ENCODE measurements at regions of chr6 and their contacts with region 1.

Region 1: GRCh38 chr6:33761922-33762629 is 15.4 kb upstream of the IP6K3 start:
- DNase-seq: peak; percentile 66
- ATAC-seq: peak; percentile 77
- H3K4me3 Mint-ChIP-seq: no peak overlapping the region
- H3K27ac Mint-ChIP-seq: no peak overlapping the region
- H3K4me1 Mint-ChIP-seq: peaks cover 7% of the 10 kb centered on the region; the same call in 1 of the 2 replicates
- H3K27me3 Mint-ChIP-seq: no peaks in the 10 kb centered on the region; the same call in 1 of the 2 replicates
- CTCF ChIP-seq: no peak

Region 2: GRCh38 chr6:33579828-33580714 is 182.0 kb before region 1 on chr6 and contains the start of gene BAK1:
- CTCF ChIA-PET with region 1: no interaction called
- POLR2A ChIA-PET with region 1: no interaction called
- DNase-seq: peak; percentile 91
- ATAC-seq: peak; percentile 96
- H3K4me3 Mint-ChIP-seq: peak within 1 kb of the TSS; percentile 77
- H3K27ac Mint-ChIP-seq: no peak within 1 kb of the TSS
- H3K4me1 Mint-ChIP-seq: peaks cover 14% of the 10 kb centered on the region
- H3K27me3 Mint-ChIP-seq: no peaks in the 10 kb centered on the region
- CTCF ChIP-seq: no peak
- total RNA-seq, gene BAK1: 40.5 to 40.9 TPM (median 40.5 TPM) in 3 replicates

Region 3: GRCh38 chr6:33744001-33744848 is 17.9 kb before region 1 on chr6:
- CTCF ChIA-PET with region 1: interaction called, 23 read pairs
- POLR2A ChIA-PET with region 1: no interaction called
- DNase-seq: peak; percentile 84
- ATAC-seq: peak; percentile 79
- H3K4me3 Mint-ChIP-seq: no peak overlapping the region
- H3K27ac Mint-ChIP-seq: no peak overlapping the region
- H3K4me1 Mint-ChIP-seq: peaks cover 48% of the 10 kb centered on the region
- H3K27me3 Mint-ChIP-seq: no peaks in the 10 kb centered on the region; the same call in 1 of the 2 replicates
- CTCF ChIP-seq: peak; percentile 79

Measured in WTC11 (cell line).